ENCODE measurements at regions of chr15 and their contacts with region 1.

Region 1: GRCh38 chr15:65650312-65651041 is 28.7 kb downstream of the SLC24A1 start:
- DNase-seq: no peak
- H3K4me3 Mint-ChIP-seq: no peak overlapping the region
- H3K27ac Mint-ChIP-seq: no peak overlapping the region
- H3K4me1 Mint-ChIP-seq: peaks cover 15% of the 10 kb centered on the region
- H3K27me3 Mint-ChIP-seq: no peaks in the 10 kb centered on the region

Region 2: DNA sequence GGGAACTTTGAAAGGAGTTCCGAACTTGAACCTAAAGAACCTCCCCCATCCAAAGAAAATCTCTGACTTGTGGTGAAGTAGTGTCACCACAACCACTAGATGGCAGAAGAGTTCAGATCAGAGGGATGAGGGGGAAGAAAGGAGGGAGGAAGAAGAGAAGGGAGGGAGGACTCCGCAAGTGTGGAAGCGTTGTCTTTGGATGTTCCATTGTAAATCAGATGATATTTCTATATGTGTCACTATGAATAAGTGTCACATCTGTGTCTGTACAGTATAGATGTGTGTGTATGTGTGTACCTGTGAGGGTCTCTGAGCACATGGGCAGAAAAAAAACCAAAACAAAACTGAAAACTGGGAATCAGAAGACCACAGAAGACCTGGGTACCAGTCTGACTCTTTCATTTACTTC is 11.8 kb before region 1 on chr15:
- CTCF ChIA-PET with region 1: interaction called, 18 read pairs
- POLR2A ChIA-PET with region 1: interaction called, 3 read pairs
- DNase-seq: peak; percentile 40
- H3K4me3 Mint-ChIP-seq: peak overlapping the region; percentile 38
- H3K27ac Mint-ChIP-seq: no peak overlapping the region
- H3K4me1 Mint-ChIP-seq: peaks cover 17% of the 10 kb centered on the region
- H3K27me3 Mint-ChIP-seq: no peaks in the 10 kb centered on the region

Region 3: DNA sequence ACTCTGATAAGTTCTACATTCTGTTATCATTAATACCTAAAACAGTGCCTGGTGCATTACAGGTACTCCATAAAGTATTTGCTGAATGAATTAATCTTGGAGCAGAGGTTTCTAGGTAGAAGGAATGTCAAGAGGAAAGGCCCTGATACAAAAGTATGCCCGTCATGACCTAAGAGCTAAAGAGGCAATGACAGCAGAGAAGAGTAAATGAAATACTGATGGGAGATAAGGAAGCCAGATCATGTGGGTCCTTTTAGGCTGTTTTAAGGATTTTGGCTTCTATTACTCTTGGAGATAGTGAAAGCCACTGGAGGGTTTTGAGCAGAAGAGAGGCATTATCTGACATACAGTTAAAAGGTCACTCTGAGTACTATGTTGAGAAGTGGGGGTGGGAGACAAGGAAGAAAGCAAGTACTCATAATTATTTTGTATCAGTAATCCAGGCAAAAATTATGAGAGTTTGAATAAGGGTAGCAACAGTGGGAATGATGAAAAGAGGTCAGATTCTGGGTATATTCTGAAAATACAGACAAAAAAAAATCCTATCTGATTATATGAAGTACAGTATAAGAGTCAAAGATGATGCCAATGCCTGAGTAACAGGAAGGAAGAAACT is 93.3 kb after region 1 on chr15:
- CTCF ChIA-PET with region 1: no interaction called
- POLR2A ChIA-PET with region 1: no interaction called
- DNase-seq: no peak
- H3K4me3 Mint-ChIP-seq: no peak overlapping the region
- H3K27ac Mint-ChIP-seq: no peak overlapping the region
- H3K4me1 Mint-ChIP-seq: peaks cover 6% of the 10 kb centered on the region
- H3K27me3 Mint-ChIP-seq: no peaks in the 10 kb centered on the region

Region 4: GRCh38 chr15:65824941-65825544 is 174.6 kb after region 1 on chr15:
- CTCF ChIA-PET with region 1: no interaction called
- POLR2A ChIA-PET with region 1: no interaction called
- DNase-seq: no peak
- H3K4me3 Mint-ChIP-seq: no peak overlapping the region
- H3K27ac Mint-ChIP-seq: no peak overlapping the region
- H3K4me1 Mint-ChIP-seq: peaks cover 52% of the 10 kb centered on the region
- H3K27me3 Mint-ChIP-seq: no peaks in the 10 kb centered on the region

Measured in activated CD4-positive, alpha-beta memory T cell treated with anti-CD3 and anti-CD28 coated beads, Interleukin-2, amount 10 ng/mL, durations not matched to agents 7 days and 5 days (primary cell).